Left colon (tissue), 2 donors: ENCODE measurements at regions of chr13 and their contacts with region 1.

Region 1: GRCh38 chr13:87274209-87274819 is 396.9 kb upstream of the SLITRK5 start:
- DNase-seq: peak in 1 of 2 donors; percentile 30
- ATAC-seq: peak; percentile 37

Region 2: GRCh38 chr13:86870444-86870843 is 403.9 kb before region 1 on chr13:
- intact Hi-C with region 1: loop called in 1 of 2 experiments (anchors 10 kb)
- DNase-seq: no peak
- ATAC-seq: no peak

Region 3: GRCh38 chr13:87498681-87499080 is 224.4 kb after region 1 on chr13:
- intact Hi-C with region 1: no loop called
- DNase-seq: no peak
- ATAC-seq: no peak